ENCODE measurements at regions of chr5 and their contacts with region 1.

Region 1: GRCh38 chr5:124741711-124742496 is 4.5 kb downstream of the ZNF608 start:
- DNase-seq: no peak
- H3K4me3 ChIP-seq: peak overlapping the region; percentile 55 to 92 (median 80)
- H3K27ac ChIP-seq: peak overlapping the region in 51 of 59 donors; percentile 5 to 99 (median 97)
- H3K27me3 ChIP-seq: peaks cover 0 to 4% (median 0%) of the 10 kb centered on the region in 45 donors
- CTCF ChIP-seq: peak in 1 of 56 donors; percentile 3

Region 2: DNA sequence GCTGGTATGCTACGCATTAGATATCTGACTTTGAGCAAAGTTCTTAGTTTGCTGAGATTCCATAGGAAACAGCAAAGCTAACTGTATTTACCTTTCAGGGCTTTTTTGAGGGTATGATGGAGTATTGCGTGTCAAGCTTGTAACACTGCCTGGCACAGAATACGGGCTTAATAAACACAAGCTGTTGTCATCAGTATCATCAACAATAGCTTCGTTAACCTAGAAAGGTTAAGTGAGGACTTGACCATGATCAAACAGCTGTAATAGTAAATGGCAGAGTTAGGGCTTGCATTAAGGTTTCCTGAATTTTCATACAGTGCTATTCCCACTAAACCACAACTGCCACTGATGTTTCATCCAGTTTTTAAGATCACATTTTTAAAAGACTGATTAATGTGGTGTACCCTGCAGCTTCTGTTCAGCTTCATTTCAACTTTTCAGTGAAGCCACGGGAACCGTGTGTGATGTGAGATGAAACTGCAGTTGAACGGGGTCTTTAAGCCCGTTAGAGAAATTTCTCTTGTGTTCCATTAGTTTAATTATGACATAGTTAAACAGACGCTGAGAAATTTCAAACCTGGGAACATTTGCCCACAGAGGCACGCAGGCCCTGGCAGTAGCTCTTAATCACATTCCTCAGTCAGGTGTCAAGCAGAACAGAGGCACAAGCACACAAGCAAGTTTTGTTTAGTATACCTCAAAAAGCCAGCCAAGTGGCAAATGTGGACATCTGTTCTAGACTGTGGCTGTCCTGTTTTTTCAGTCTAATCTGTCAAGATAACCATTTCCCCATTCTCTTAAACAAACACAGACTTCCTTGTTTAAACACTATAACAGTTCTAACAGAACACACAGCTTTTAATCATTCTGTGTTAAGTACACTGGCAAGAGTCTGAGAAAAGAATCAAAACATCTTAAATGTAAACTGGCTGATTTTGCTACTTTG is 142.6 kb before region 1 on chr5:
- intact Hi-C with region 1: loop called in 1 of 2 experiments (anchors 5 kb)
- DNase-seq: peak in 1 of 10 donors; percentile 23
- H3K4me3 ChIP-seq: peak overlapping the region in 5 of 59 donors; percentile 1 to 23 (median 17)
- H3K27ac ChIP-seq: peak overlapping the region in 57 of 59 donors; percentile 1 to 90 (median 71)
- H3K27me3 ChIP-seq: no peaks in the 10 kb centered on the region
- CTCF ChIP-seq: no peak

Region 3: GRCh38 chr5:124706729-124707361 is 35.1 kb before region 1 on chr5:
- intact Hi-C with region 1: loop called in 1 of 2 experiments (anchors 5 kb)
- DNase-seq: no peak
- H3K4me3 ChIP-seq: peak overlapping the region in 55 of 59 donors; percentile 2 to 49 (median 29)
- H3K27ac ChIP-seq: peak overlapping the region in 35 of 59 donors; percentile 0 to 69 (median 41)
- H3K27me3 ChIP-seq: no peaks in the 10 kb centered on the region
- CTCF ChIP-seq: no peak

Region 4: DNA sequence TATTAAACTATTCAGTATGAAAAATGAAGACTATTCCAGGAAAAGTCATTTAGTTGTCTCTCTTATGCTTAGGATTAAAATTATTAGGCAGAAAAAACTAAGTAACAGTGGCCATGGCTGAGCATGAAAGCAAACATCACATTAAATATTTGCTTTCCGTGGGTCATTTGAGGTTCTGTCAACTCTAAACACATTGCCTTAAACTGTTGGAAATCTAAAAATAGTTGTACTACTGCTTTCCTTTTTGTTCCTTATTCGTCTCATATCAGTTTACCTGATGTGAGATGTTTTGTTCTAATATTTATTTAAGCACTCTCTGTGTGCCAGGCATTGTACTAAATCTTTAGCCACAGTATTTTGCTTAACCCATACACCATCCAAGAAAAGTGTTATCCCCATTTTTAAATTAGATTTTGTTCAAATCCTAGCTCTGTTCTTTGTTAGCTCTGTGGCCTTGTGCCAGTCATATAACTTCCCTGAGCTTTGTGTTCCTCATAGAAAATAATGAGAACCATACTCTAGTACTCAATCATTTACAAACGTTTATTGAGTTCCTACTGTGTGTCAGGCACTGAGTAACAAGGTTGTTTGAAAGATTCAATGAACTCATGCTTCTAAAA is 23.2 kb after region 1 on chr5:
- intact Hi-C with region 1: no loop called
- DNase-seq: no peak
- H3K4me3 ChIP-seq: no peak overlapping the region
- H3K27ac ChIP-seq: no peak overlapping the region
- H3K27me3 ChIP-seq: no peaks in the 10 kb centered on the region
- CTCF ChIP-seq: no peak

Measured in dorsolateral prefrontal cortex (tissue), 120 donors.